ENCODE measurements at regions of chr7 and their contacts with region 1.

Region 1: GRCh38 chr7:47945261-47946001 is 2.8 kb downstream of the PKD1L1 start:
- DNase-seq: peak; percentile 45
- H3K27ac ChIP-seq: no peak overlapping the region
- CTCF ChIP-seq: peak; percentile 89

Region 2: DNA sequence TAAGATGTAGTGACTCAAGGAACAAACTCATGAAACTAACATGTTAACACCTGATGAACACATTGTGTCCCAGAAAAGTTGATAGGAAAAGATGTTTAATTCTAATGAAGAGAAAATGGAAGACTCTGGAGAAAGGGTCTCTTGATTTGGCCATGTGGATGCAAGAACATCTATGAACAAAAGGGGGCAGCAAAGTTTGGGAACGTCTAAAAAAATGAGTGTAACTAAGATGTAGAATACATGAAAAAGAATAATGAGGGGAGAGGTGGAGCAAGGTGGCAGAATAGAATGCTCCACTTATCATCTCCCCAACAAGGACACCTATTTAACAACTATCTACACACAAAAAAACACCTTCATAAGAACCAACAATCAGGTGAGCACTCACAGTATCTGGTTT is 1168.6 kb before region 1 on chr7:
- CTCF ChIA-PET with region 1: no interaction called
- POLR2A ChIA-PET with region 1: no interaction called
- DNase-seq: no peak
- H3K27ac ChIP-seq: no peak overlapping the region
- CTCF ChIP-seq: no peak; the same call in 1 of the 2 replicates

Region 3: DNA sequence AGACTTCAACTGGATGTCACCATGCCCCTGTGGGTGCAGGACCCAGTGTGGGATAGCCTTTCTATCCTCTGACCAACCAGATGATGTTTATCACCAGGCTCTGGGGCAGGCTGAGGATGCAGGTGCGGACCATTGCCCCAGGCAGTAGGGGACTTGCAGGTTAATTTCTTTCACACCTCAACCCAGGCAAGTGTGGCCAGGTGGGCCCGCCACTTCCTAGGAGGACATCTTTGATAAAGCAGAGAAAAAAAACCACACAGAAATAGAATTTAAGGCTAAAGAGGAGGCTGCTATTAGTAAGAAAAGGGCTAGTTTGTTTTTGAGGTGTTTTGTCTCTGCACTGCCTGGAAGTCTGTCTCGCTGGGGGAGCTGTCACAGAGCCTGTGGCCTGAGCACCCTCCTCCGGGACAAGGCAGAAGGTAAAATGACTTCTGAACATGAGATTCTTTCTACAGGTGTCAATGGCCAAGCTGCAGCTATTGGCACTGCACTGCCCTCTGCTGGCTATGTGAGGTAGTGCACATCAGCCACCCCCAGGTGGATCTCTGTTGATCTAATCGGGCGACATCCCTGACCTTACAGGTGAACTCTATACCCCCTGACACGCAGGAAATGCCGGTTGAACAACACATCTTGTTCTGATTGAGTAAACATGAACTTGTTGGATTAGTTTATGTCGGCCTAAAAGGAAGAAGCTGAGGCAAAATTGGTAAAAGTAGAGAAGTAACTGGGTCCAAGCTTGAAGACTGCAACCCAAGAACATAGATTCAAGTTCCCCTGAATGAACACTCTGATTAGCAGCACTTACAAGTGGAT is 164.6 kb after region 1 on chr7:
- CTCF ChIA-PET with region 1: interaction called, 30 read pairs
- POLR2A ChIA-PET with region 1: no interaction called
- DNase-seq: peak; percentile 88
- H3K27ac ChIP-seq: peak overlapping the region; percentile 29
- CTCF ChIP-seq: peak; percentile 99

Region 4: GRCh38 chr7:48154792-48155413 is 209.5 kb after region 1 on chr7:
- CTCF ChIA-PET with region 1: interaction called, 44 read pairs
- POLR2A ChIA-PET with region 1: no interaction called
- DNase-seq: peak; percentile 53
- H3K27ac ChIP-seq: no peak overlapping the region
- CTCF ChIP-seq: peak; percentile 69

Measured in RWPE1 (cell line).